H1 (cell line): ENCODE measurements at regions of chr1 and their contacts with region 1.

Region 1: DNA sequence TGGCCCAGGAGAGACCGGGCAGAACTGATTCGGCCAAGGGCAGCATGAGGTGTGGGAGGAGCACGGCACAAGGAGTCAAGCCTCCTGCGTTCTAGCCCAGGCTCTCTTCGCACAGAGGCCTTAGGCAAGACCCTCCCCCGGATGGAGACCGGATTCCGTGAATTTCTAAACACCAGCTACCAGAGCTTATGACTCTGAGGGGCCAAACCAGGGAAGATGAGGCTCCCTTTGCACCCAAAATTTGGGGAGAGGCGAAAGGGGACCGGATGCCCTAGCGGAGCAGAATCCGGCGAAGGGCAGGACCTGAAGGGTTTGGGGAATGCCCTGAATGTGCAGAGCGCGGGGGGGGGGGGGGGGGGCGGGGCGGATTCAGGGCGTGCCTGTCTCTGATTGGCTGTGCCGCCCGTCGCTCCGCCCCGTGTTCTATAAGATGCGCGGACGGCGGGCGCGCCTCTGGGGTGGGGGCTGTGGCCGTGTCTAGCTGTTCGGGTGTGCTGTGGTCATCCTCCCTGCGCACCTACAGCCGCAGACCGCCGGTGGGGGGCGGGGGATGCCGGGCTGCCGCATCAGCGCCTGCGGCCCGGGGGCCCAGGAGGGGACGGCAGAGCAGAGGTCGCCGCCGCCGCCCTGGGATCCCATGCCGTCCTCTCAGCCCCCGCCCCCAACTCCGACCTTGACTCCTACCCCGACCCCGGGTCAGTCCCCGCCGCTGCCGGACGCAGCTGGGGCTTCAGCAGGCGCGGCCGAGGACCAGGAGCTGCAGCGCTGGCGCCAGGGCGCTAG is at the start of gene TRNP1:
- DNase-seq: peak in 1 of 2 experiments; percentile 91
- H3K4me3 ChIP-seq: peak within 1 kb of the TSS; percentile 57 to 97 (median 75)
- H3K27ac ChIP-seq: peak within 1 kb of the TSS; percentile 40; the same call in 1 of the 2 replicates
- H3K4me1 ChIP-seq: peaks cover 9 to 32% (median 15%) of the 10 kb centered on the region in 4 experiments
- H3K27me3 ChIP-seq: no peaks in the 10 kb centered on the region; a peak in 2 of 7 replicates
- CTCF ChIP-seq: no peak
- EP300 ChIP-seq: no peak
- POLR2A ChIP-seq: peak in 1 of 2 experiments; percentile 96; a peak in 2 of 3 replicates
- RAD21 ChIP-seq: no peak; a peak in 1 of 4 replicates
- total RNA-seq, gene TRNP1: 51.6 and 51.7 TPM in 2 replicates

Region 2: GRCh38 chr1:26959722-26960615 is 33.5 kb before region 1 on chr1 and contains the start of gene KDF1:
- CTCF ChIA-PET with region 1: interaction called, 5 read pairs
- POLR2A ChIA-PET with region 1: interaction called, 35 read pairs
- DNase-seq: peak; percentile 77 to 95
- H3K4me3 ChIP-seq: peak within 1 kb of the TSS; percentile 84 to 97 (median 86)
- H3K27ac ChIP-seq: peak within 1 kb of the TSS; percentile 76; the same call in 1 of the 2 replicates
- H3K4me1 ChIP-seq: peaks cover 0 to 3% (median 0%) of the 10 kb centered on the region in 4 experiments; a peak in 3 of 7 replicates
- H3K27me3 ChIP-seq: no peaks in the 10 kb centered on the region
- CTCF ChIP-seq: peak; percentile 15 to 34 (median 26); a peak in 2 of 4 replicates
- EP300 ChIP-seq: peak; percentile 4 to 86; a peak in 2 of 3 replicates
- POLR2A ChIP-seq: peak in 1 of 2 experiments; percentile 62; a peak in 1 of 3 replicates
- RAD21 ChIP-seq: no peak; a peak in 1 of 4 replicates
- total RNA-seq, gene KDF1: 16.7 and 16.9 TPM in 2 replicates

Region 3: DNA sequence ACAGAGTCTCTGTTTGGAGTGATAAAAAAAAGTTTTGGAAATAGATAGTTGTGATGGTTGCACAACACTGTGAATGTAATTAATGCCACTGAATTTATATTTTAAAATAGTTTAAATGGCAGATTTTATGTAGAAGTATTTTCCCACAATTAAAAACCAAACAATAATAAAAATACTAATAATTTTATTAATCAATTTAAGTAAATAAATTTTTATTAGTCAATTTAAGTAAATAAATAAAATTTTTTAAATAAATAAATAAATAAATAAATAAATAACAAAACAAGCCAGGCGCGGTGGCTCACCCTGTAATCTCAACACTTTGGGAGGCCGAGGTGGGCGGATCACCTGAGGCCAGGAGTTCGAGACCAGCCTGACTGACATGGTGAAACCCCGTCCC is 28.2 kb before region 1 on chr1:
- CTCF ChIA-PET with region 1: interaction called, 130 read pairs
- POLR2A ChIA-PET with region 1: interaction called, 158 read pairs
- DNase-seq: no peak
- H3K4me3 ChIP-seq: no peak overlapping the region
- H3K27ac ChIP-seq: no peak overlapping the region
- H3K4me1 ChIP-seq: peaks cover 0 to 3% (median 0%) of the 10 kb centered on the region in 4 experiments; a peak in 3 of 7 replicates
- H3K27me3 ChIP-seq: no peaks in the 10 kb centered on the region
- CTCF ChIP-seq: no peak
- EP300 ChIP-seq: no peak
- POLR2A ChIP-seq: no peak
- RAD21 ChIP-seq: no peak

Region 4: GRCh38 chr1:26970810-26971209 is 22.6 kb before region 1 on chr1:
- CTCF ChIA-PET with region 1: interaction called, 130 read pairs
- POLR2A ChIA-PET with region 1: interaction called, 158 read pairs
- DNase-seq: no peak
- H3K4me3 ChIP-seq: no peak overlapping the region
- H3K27ac ChIP-seq: no peak overlapping the region
- H3K4me1 ChIP-seq: peaks cover 0 to 6% (median 3%) of the 10 kb centered on the region in 4 experiments; a peak in 3 of 7 replicates
- H3K27me3 ChIP-seq: no peaks in the 10 kb centered on the region
- CTCF ChIP-seq: no peak
- EP300 ChIP-seq: no peak
- POLR2A ChIP-seq: no peak
- RAD21 ChIP-seq: no peak

Region 5: GRCh38 chr1:27010989-27011764 is 17.7 kb after region 1 on chr1:
- CTCF ChIA-PET with region 1: interaction called, 133 read pairs
- POLR2A ChIA-PET with region 1: interaction called, 1,829 read pairs
- DNase-seq: peak in 1 of 2 experiments; percentile 85
- H3K4me3 ChIP-seq: peak overlapping the region; percentile 88 to 100 (median 92)
- H3K27ac ChIP-seq: peak overlapping the region; percentile 64; the same call in 1 of the 2 replicates
- H3K4me1 ChIP-seq: peaks cover 18 to 39% (median 33%) of the 10 kb centered on the region in 4 experiments
- H3K27me3 ChIP-seq: no peaks in the 10 kb centered on the region
- CTCF ChIP-seq: no peak
- EP300 ChIP-seq: no peak; a peak in 1 of 3 replicates
- POLR2A ChIP-seq: peak in 1 of 2 experiments; percentile 54; a peak in 1 of 3 replicates
- RAD21 ChIP-seq: no peak; a peak in 1 of 4 replicates

Region 6: GRCh38 chr1:27031235-27032118 is 38.0 kb after region 1 on chr1:
- CTCF ChIA-PET with region 1: interaction called, 139 read pairs
- POLR2A ChIA-PET with region 1: interaction called, 1,829 read pairs
- DNase-seq: peak in 1 of 2 experiments; percentile 80
- H3K4me3 ChIP-seq: peak overlapping the region; percentile 9 to 48 (median 23); a peak in 7 of 8 replicates
- H3K27ac ChIP-seq: peak overlapping the region; percentile 77
- H3K4me1 ChIP-seq: peaks cover 16 to 29% (median 19%) of the 10 kb centered on the region in 4 experiments
- H3K27me3 ChIP-seq: no peaks in the 10 kb centered on the region
- CTCF ChIP-seq: no peak
- EP300 ChIP-seq: peak; percentile 40 to 57; a peak in 1 of 3 replicates
- POLR2A ChIP-seq: peak in 1 of 2 experiments; percentile 47; a peak in 2 of 3 replicates
- RAD21 ChIP-seq: peak in 1 of 2 experiments; percentile 22; a peak in 1 of 4 replicates

Region 7: DNA sequence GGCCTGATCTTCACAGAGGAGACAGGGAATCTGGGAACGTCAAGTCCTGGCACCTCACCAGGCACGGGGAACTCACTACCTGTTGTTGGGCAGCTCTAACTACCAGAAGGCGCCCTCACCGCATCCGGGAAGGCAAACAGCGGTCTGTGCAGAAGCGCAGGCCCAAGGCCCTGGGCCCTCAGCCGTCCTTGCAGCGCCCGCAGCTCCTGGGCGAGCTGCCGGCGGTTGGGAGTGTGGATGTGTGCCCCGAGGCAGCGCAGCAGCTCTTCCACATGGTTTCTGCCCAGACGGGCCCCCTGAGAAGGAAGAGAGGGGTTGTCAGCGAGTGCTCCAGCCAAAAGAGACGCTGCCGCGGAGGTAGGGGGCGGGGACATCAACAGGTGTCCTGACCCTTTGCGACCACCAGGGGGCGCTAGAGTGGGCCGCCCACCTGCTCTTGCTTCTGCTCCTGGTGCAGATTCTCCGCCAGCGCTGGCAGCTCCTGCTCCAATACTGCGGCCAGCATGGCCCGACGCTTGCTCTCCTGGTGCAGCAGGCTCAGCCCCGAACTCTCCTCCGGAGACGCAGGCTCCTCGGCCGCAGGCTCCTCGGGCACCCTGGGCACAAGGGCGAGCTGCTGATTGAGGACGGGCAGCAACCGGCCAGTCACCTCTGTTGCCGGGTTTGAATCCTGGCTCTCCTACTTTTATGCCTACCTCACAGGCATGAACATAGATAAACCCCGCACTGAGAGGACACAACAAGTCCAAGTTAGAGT is 364.0 kb after region 1 on chr1:
- CTCF ChIA-PET with region 1: no interaction called
- POLR2A ChIA-PET with region 1: no interaction called
- DNase-seq: peak; percentile 73 to 94
- H3K4me3 ChIP-seq: peak overlapping the region in 3 of 4 experiments; percentile 13 to 34 (median 28); a peak in 4 of 8 replicates
- H3K27ac ChIP-seq: no peak overlapping the region
- H3K4me1 ChIP-seq: peaks cover 0 to 14% (median 7%) of the 10 kb centered on the region in 4 experiments; a peak in 6 of 7 replicates
- H3K27me3 ChIP-seq: peaks cover 12 to 47% (median 36%) of the 10 kb centered on the region in 4 experiments
- CTCF ChIP-seq: peak in 2 of 3 experiments; percentile 94 to 98; a peak in 3 of 4 replicates
- EP300 ChIP-seq: no peak; a peak in 1 of 3 replicates
- POLR2A ChIP-seq: no peak
- RAD21 ChIP-seq: peak; percentile 60 to 71